ENCODE measurements at regions of chr4 and their contacts with region 1.

Region 1: GRCh38 chr4:153488006-153488891 is 22.1 kb downstream of the TMEM131L start:
- DNase-seq: peak; percentile 89
- H3K4me3 Mint-ChIP-seq: peak overlapping the region; percentile 82
- H3K27ac Mint-ChIP-seq: peak overlapping the region; percentile 96
- H3K4me1 Mint-ChIP-seq: peaks cover 70% of the 10 kb centered on the region
- H3K27me3 Mint-ChIP-seq: no peaks in the 10 kb centered on the region

Region 2: DNA sequence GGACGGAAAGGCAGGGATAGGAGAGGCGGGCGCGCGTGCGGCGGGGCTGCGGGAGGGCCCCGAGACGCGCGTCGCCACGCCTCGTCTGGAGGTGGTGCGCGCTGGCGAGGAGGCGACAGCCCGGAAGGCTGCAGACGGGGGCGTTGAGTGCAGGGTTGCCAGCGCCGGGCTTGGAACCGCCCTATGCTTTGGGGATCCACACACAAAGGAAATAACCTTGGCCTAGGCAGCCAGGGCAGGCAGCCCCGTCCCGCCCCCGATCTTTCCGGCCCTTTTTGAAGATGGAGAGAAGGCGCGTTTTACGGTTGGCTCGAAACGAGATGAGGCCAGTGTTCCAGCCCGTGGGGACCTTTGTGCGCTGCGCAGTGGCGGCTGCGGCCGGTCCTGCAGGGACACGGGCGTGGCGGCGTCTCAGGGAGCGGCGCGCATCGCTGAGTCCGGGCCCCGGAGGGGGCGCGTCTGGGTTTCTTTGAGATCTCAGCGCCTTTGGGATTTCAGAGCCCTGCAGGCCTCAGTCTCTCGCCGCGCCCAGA is 334.8 kb before region 1 on chr4:
- intact Hi-C with region 1: loop called (anchors 10 kb)
- DNase-seq: peak; percentile 92
- H3K4me3 Mint-ChIP-seq: peak overlapping the region; percentile 89
- H3K27ac Mint-ChIP-seq: peak overlapping the region; percentile 79
- H3K4me1 Mint-ChIP-seq: peaks cover 48% of the 10 kb centered on the region
- H3K27me3 Mint-ChIP-seq: peaks cover 36% of the 10 kb centered on the region

Region 3: GRCh38 chr4:153432968-153433753 is 55.1 kb before region 1 on chr4:
- intact Hi-C with region 1: loop called (anchors 2 kb)
- DNase-seq: peak; percentile 93
- H3K4me3 Mint-ChIP-seq: peak overlapping the region; percentile 83
- H3K27ac Mint-ChIP-seq: peak overlapping the region; percentile 91
- H3K4me1 Mint-ChIP-seq: peaks cover 45% of the 10 kb centered on the region
- H3K27me3 Mint-ChIP-seq: peaks cover 1% of the 10 kb centered on the region

Region 4: GRCh38 chr4:153497988-153498967 is 10.0 kb after region 1 on chr4:
- intact Hi-C with region 1: loop called (anchors 1 kb)
- DNase-seq: peak; percentile 61
- H3K4me3 Mint-ChIP-seq: peak overlapping the region; percentile 80
- H3K27ac Mint-ChIP-seq: peak overlapping the region; percentile 94
- H3K4me1 Mint-ChIP-seq: peaks cover 76% of the 10 kb centered on the region
- H3K27me3 Mint-ChIP-seq: no peaks in the 10 kb centered on the region

Region 5: GRCh38 chr4:153514001-153514526 is 25.8 kb after region 1 on chr4:
- intact Hi-C with region 1: no loop called
- DNase-seq: no peak
- H3K4me3 Mint-ChIP-seq: no peak overlapping the region
- H3K27ac Mint-ChIP-seq: no peak overlapping the region
- H3K4me1 Mint-ChIP-seq: peaks cover 37% of the 10 kb centered on the region
- H3K27me3 Mint-ChIP-seq: no peaks in the 10 kb centered on the region

Region 6: GRCh38 chr4:153528705-153529485 is 40.6 kb after region 1 on chr4:
- intact Hi-C with region 1: loop called (anchors 1 kb)
- DNase-seq: peak; percentile 68
- H3K4me3 Mint-ChIP-seq: peak overlapping the region; percentile 80
- H3K27ac Mint-ChIP-seq: peak overlapping the region; percentile 95
- H3K4me1 Mint-ChIP-seq: peaks cover 72% of the 10 kb centered on the region
- H3K27me3 Mint-ChIP-seq: no peaks in the 10 kb centered on the region

Region 7: GRCh38 chr4:153573881-153574802 is 85.9 kb after region 1 on chr4:
- intact Hi-C with region 1: loop called (anchors 1 kb)
- DNase-seq: peak; percentile 89
- H3K4me3 Mint-ChIP-seq: no peak overlapping the region
- H3K27ac Mint-ChIP-seq: peak overlapping the region; percentile 52
- H3K4me1 Mint-ChIP-seq: peaks cover 49% of the 10 kb centered on the region
- H3K27me3 Mint-ChIP-seq: no peaks in the 10 kb centered on the region